ENCODE measurements at regions of chr12 and their contacts with region 1.

Region 1: DNA sequence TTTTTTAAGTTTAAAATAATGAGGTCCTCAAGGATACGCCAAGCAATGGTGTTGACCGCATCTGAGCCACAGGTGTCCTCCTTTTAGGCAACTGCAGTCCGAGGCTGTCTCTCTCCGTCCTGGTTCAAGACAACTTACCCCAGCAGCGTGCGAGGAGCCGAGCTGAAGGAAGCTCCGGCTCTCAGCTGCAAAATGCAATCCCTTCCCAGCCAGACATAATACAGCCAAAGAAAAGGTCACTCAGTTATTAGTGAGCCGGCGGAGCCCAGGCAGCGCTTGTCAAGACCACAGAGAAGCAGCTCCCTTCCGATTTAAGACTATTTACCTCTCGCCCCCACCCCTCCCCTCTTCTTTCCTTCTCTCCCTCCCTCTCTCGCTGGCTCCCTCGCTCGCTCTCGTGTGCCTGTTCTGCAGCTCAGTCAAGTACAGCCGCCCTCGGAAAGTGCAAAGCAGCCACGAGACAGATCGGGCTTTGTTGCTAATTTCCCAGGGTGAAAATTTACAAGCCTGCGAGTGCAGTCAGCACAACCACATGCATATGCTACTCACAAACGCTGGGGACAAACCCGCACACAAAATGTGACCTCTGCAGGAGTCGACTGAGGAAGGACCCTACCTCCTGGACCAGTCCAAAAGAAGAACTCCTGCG is 363 bp upstream of the LMO3 start:
- DNase-seq: peak; percentile 67
- H3K4me3 ChIP-seq: peak overlapping the region; percentile 77
- H3K27ac ChIP-seq: peak overlapping the region; percentile 80
- H3K4me1 ChIP-seq: peaks cover 57% of the 10 kb centered on the region
- CTCF ChIP-seq: no peak

Region 2: DNA sequence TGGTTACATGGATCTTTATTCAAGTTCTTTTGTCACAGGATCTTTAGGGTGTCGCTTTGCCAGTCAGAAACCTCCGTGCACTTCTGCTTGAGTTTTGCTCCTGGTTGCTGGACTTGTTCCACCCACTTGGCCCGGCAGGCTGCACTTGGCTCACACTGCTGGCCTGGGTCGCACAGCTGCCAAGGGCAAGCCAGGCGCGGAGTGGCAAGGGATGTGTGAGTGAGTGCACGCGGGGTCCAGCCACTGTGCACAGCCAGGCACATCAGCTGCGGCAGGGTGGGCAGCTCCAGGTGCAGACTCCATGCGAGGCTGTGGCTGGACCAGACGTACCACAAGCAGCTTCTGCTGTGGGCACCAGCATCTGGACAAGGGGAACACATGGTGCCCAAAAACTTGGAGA is 618.6 kb before region 1 on chr12:
- CTCF ChIA-PET with region 1: no interaction called
- POLR2A ChIA-PET with region 1: interaction called, 6 read pairs
- intact Hi-C with region 1: loop called (anchors 5 kb)
- DNase-seq: no peak
- H3K4me3 ChIP-seq: peak overlapping the region; percentile 78
- H3K27ac ChIP-seq: peak overlapping the region; percentile 87
- H3K4me1 ChIP-seq: peaks cover 47% of the 10 kb centered on the region
- CTCF ChIP-seq: no peak

Region 3: GRCh38 chr12:16198884-16199283 is 407.4 kb before region 1 on chr12:
- CTCF ChIA-PET with region 1: no interaction called
- POLR2A ChIA-PET with region 1: no interaction called
- intact Hi-C with region 1: loop called (anchors 5 kb)
- DNase-seq: peak; percentile 98
- H3K4me3 ChIP-seq: peak overlapping the region; percentile 48
- H3K27ac ChIP-seq: peak overlapping the region; percentile 91
- H3K4me1 ChIP-seq: peaks cover 32% of the 10 kb centered on the region
- CTCF ChIP-seq: peak; percentile 34; the same call in 1 of the 2 replicates

Region 4: GRCh38 chr12:16384732-16385131 is 221.6 kb before region 1 on chr12:
- CTCF ChIA-PET with region 1: no interaction called
- POLR2A ChIA-PET with region 1: no interaction called
- intact Hi-C with region 1: no loop called
- DNase-seq: no peak
- H3K4me3 ChIP-seq: no peak overlapping the region
- H3K27ac ChIP-seq: no peak overlapping the region
- H3K4me1 ChIP-seq: no peaks in the 10 kb centered on the region
- CTCF ChIP-seq: no peak

Region 5: GRCh38 chr12:16593546-16593945 is 12.8 kb before region 1 on chr12:
- CTCF ChIA-PET with region 1: no interaction called
- POLR2A ChIA-PET with region 1: interaction called, 17 read pairs
- intact Hi-C with region 1: no loop called
- DNase-seq: no peak
- H3K4me3 ChIP-seq: no peak overlapping the region
- H3K27ac ChIP-seq: no peak overlapping the region
- H3K4me1 ChIP-seq: peaks cover 3% of the 10 kb centered on the region
- CTCF ChIP-seq: no peak

Region 6: DNA sequence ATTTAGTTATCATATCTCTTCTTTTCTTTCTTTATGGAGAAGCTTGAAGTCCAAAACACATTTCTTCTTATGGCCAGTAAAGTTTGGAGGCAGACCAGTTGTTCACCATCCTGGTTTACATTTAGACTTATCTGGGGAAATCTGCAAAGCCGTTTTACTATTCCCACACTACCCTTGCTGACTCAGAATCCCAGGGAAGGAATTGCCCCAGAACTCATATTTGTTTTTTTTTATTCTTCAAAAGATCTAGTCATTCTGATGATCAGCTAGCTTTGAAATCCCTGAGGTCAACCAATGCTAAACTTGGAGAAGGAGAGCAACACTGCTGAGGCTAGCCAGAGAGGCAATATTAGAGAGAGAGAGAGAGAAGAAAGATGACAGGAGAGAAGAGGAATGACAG is 11.9 kb after region 1 on chr12:
- CTCF ChIA-PET with region 1: no interaction called
- POLR2A ChIA-PET with region 1: interaction called, 12 read pairs
- intact Hi-C with region 1: no loop called
- DNase-seq: no peak
- H3K4me3 ChIP-seq: no peak overlapping the region
- H3K27ac ChIP-seq: no peak overlapping the region
- H3K4me1 ChIP-seq: peaks cover 20% of the 10 kb centered on the region
- CTCF ChIP-seq: no peak

Region 7: DNA sequence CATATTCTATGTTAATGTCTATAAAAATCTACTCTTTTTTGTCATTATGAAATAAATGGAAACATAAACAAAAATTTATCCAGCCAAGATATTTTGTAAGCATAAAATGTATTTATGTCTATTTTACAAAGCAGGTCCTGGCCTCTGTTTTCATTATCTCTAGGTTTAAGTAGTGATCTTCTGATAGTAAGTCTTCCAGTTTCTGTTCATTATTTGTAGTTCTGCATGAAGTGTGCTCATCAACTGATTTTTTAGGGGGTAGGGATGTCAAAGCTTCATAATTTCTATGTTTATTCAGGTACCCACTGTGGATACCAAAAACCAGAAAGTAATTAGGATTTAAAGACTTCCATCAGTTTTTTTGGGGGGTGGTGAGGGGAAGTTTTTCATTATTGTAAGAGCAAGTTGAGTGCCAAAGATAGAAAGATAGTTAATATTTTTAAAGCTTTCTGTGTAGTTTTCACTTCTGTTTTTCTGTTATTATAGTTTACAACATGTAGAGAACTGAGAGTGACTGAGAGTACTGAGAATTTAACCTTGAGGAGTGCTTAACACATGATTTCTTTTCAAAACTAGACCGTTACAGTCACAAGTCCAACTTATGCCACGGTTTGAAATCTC is 30.2 kb after region 1 on chr12:
- CTCF ChIA-PET with region 1: no interaction called
- POLR2A ChIA-PET with region 1: interaction called, 31 read pairs
- intact Hi-C with region 1: loop called (anchors 2 kb)
- DNase-seq: peak; percentile 69
- H3K4me3 ChIP-seq: peak overlapping the region; percentile 11
- H3K27ac ChIP-seq: peak overlapping the region; percentile 94
- H3K4me1 ChIP-seq: peaks cover 36% of the 10 kb centered on the region
- CTCF ChIP-seq: no peak

Measured in OCI-LY7 (cell line).